B cell (primary cell): ENCODE measurements at regions of chr9 and their contacts with region 1.

Region 1: DNA sequence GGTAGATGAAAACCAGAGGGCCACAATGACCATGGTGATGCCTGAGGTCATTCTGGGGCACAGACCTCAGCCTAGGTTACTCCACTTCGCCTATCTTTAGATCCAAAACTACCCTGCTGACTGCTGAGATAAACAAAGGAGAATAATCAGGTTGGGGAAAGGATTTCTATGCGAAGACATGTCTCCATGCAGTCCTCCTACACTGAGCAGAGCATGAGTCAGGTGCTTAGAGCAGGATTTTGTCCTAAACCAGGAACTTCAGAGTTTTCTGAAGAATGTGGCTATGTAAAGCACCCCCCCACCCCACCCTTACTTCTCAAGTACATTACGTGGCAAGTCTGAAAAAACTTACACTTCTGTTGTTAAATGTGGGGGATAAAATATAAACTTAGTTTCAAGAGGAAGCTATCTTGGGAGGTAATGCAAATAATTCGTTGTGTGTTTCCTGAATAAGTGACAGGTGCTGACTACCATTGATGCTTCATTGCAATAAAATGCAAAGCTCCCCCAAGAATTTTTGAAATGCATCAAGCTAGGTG is 19.4 kb downstream of the PDCD1LG2 start:
- DNase-seq: peak; percentile 72
- ATAC-seq: peak; percentile 73
- H3K4me3 ChIP-seq: peak overlapping the region in 1 of 5 experiments; percentile 10
- H3K4me3 Mint-ChIP-seq: peak overlapping the region; percentile 78
- H3K27ac ChIP-seq: no peak overlapping the region
- H3K27ac Mint-ChIP-seq: peak overlapping the region; percentile 5
- H3K4me1 ChIP-seq: peaks cover 36 to 42% of the 10 kb centered on the region in 2 donors
- H3K4me1 Mint-ChIP-seq: peaks cover 51% of the 10 kb centered on the region
- H3K27me3 ChIP-seq: no peaks in the 10 kb centered on the region
- H3K27me3 Mint-ChIP-seq: peaks cover 5% of the 10 kb centered on the region
- CTCF ChIP-seq: no peak

Region 2: GRCh38 chr9:5499889-5500398 is 29.8 kb before region 1 on chr9:
- CTCF ChIA-PET with region 1: no interaction called
- POLR2A ChIA-PET with region 1: interaction called, 7 read pairs
- intact Hi-C with region 1: loop called (anchors 5 kb)
- DNase-seq: no peak
- ATAC-seq: no peak
- H3K4me3 ChIP-seq: no peak overlapping the region
- H3K4me3 Mint-ChIP-seq: no peak overlapping the region
- H3K27ac ChIP-seq: no peak overlapping the region
- H3K27ac Mint-ChIP-seq: no peak overlapping the region
- H3K4me1 ChIP-seq: no peaks in the 10 kb centered on the region
- H3K4me1 Mint-ChIP-seq: no peaks in the 10 kb centered on the region
- H3K27me3 ChIP-seq: peaks cover 0 to 17% (median 5%) of the 10 kb centered on the region in 4 experiments
- H3K27me3 Mint-ChIP-seq: no peaks in the 10 kb centered on the region
- CTCF ChIP-seq: no peak